ENCODE measurements at regions of chr5 and their contacts with region 1.

Region 1: GRCh38 chr5:62256161-62257019 is 49.6 kb upstream of the KIF2A start:
- DNase-seq: peak in 7 of 9 donors; percentile 16 to 77 (median 66)
- ATAC-seq: peak; percentile 82
- H3K4me3 ChIP-seq: peak overlapping the region; percentile 23
- H3K4me3 Mint-ChIP-seq: peak overlapping the region; percentile 59 to 91 (median 80)
- H3K27ac ChIP-seq: peak overlapping the region; percentile 70
- H3K27ac Mint-ChIP-seq: peak overlapping the region; percentile 87 to 99 (median 95)
- H3K4me1 ChIP-seq: peaks cover 12 to 37% of the 10 kb centered on the region in 2 donors
- H3K4me1 Mint-ChIP-seq: peaks cover 39 to 87% (median 83%) of the 10 kb centered on the region in 7 donors
- H3K27me3 ChIP-seq: no peaks in the 10 kb centered on the region
- H3K27me3 Mint-ChIP-seq: no peaks in the 10 kb centered on the region

Region 2: GRCh38 chr5:62112689-62113228 is 143.6 kb before region 1 on chr5:
- CTCF ChIA-PET with region 1: no interaction called
- POLR2A ChIA-PET with region 1: no interaction called
- intact Hi-C with region 1: no loop called
- DNase-seq: no peak
- ATAC-seq: no peak
- H3K4me3 ChIP-seq: no peak overlapping the region
- H3K4me3 Mint-ChIP-seq: no peak overlapping the region
- H3K27ac ChIP-seq: no peak overlapping the region
- H3K27ac Mint-ChIP-seq: no peak overlapping the region
- H3K4me1 ChIP-seq: no peaks in the 10 kb centered on the region
- H3K4me1 Mint-ChIP-seq: no peaks in the 10 kb centered on the region
- H3K27me3 ChIP-seq: no peaks in the 10 kb centered on the region
- H3K27me3 Mint-ChIP-seq: peaks cover 4 to 21% (median 11%) of the 10 kb centered on the region in 5 donors

Region 3: GRCh38 chr5:62231576-62231975 is 24.8 kb before region 1 on chr5:
- CTCF ChIA-PET with region 1: no interaction called
- POLR2A ChIA-PET with region 1: no interaction called
- intact Hi-C with region 1: loop called in 1 of 2 experiments (anchors 1 kb)
- DNase-seq: no peak
- ATAC-seq: no peak
- H3K4me3 ChIP-seq: no peak overlapping the region
- H3K4me3 Mint-ChIP-seq: no peak overlapping the region
- H3K27ac ChIP-seq: no peak overlapping the region
- H3K27ac Mint-ChIP-seq: no peak overlapping the region
- H3K4me1 ChIP-seq: no peaks in the 10 kb centered on the region
- H3K4me1 Mint-ChIP-seq: peaks cover 0 to 41% (median 0%) of the 10 kb centered on the region in 7 donors
- H3K27me3 ChIP-seq: no peaks in the 10 kb centered on the region
- H3K27me3 Mint-ChIP-seq: no peaks in the 10 kb centered on the region

Region 4: GRCh38 chr5:62284946-62285891 is 28.8 kb after region 1 on chr5:
- CTCF ChIA-PET with region 1: interaction called, 3 read pairs
- POLR2A ChIA-PET with region 1: interaction called, 3 read pairs
- intact Hi-C with region 1: loop called in 1 of 2 experiments (anchors 1 kb)
- DNase-seq: peak in 3 of 9 donors; percentile 15 to 78 (median 19)
- ATAC-seq: peak; percentile 34
- H3K4me3 ChIP-seq: no peak overlapping the region
- H3K4me3 Mint-ChIP-seq: peak overlapping the region in 1 of 10 donors; percentile 75
- H3K27ac ChIP-seq: no peak overlapping the region
- H3K27ac Mint-ChIP-seq: peak overlapping the region in 5 of 9 donors; percentile 2 to 96 (median 37)
- H3K4me1 ChIP-seq: peaks cover 2 to 30% of the 10 kb centered on the region in 2 donors
- H3K4me1 Mint-ChIP-seq: peaks cover 3 to 63% (median 34%) of the 10 kb centered on the region in 7 donors
- H3K27me3 ChIP-seq: no peaks in the 10 kb centered on the region
- H3K27me3 Mint-ChIP-seq: no peaks in the 10 kb centered on the region

Region 5: GRCh38 chr5:62297026-62297425 is 40.6 kb after region 1 on chr5:
- CTCF ChIA-PET with region 1: interaction called, 3 read pairs
- POLR2A ChIA-PET with region 1: interaction called, 5 read pairs
- intact Hi-C with region 1: loop called in 1 of 2 experiments (anchors 2 kb)
- DNase-seq: peak in 3 of 9 donors; percentile 18 to 21 (median 20)
- ATAC-seq: no peak
- H3K4me3 ChIP-seq: no peak overlapping the region
- H3K4me3 Mint-ChIP-seq: peak overlapping the region; percentile 30 to 81 (median 72)
- H3K27ac ChIP-seq: no peak overlapping the region
- H3K27ac Mint-ChIP-seq: peak overlapping the region in 8 of 9 donors; percentile 15 to 84 (median 74)
- H3K4me1 ChIP-seq: peaks cover 46% of the 10 kb centered on the region in 2 donors
- H3K4me1 Mint-ChIP-seq: peaks cover 24 to 69% (median 55%) of the 10 kb centered on the region in 7 donors
- H3K27me3 ChIP-seq: no peaks in the 10 kb centered on the region
- H3K27me3 Mint-ChIP-seq: no peaks in the 10 kb centered on the region

Region 6: GRCh38 chr5:62331921-62332320 is 75.5 kb after region 1 on chr5:
- CTCF ChIA-PET with region 1: no interaction called
- POLR2A ChIA-PET with region 1: no interaction called
- intact Hi-C with region 1: loop called in 1 of 2 experiments (anchors 2 kb)
- DNase-seq: no peak
- ATAC-seq: no peak
- H3K4me3 ChIP-seq: no peak overlapping the region
- H3K4me3 Mint-ChIP-seq: no peak overlapping the region
- H3K27ac ChIP-seq: no peak overlapping the region
- H3K27ac Mint-ChIP-seq: peak overlapping the region in 5 of 9 donors; percentile 8 to 63 (median 13)
- H3K4me1 ChIP-seq: peaks cover 9 to 33% of the 10 kb centered on the region in 2 donors
- H3K4me1 Mint-ChIP-seq: peaks cover 46 to 91% (median 84%) of the 10 kb centered on the region in 7 donors
- H3K27me3 ChIP-seq: no peaks in the 10 kb centered on the region
- H3K27me3 Mint-ChIP-seq: no peaks in the 10 kb centered on the region

Region 7: DNA sequence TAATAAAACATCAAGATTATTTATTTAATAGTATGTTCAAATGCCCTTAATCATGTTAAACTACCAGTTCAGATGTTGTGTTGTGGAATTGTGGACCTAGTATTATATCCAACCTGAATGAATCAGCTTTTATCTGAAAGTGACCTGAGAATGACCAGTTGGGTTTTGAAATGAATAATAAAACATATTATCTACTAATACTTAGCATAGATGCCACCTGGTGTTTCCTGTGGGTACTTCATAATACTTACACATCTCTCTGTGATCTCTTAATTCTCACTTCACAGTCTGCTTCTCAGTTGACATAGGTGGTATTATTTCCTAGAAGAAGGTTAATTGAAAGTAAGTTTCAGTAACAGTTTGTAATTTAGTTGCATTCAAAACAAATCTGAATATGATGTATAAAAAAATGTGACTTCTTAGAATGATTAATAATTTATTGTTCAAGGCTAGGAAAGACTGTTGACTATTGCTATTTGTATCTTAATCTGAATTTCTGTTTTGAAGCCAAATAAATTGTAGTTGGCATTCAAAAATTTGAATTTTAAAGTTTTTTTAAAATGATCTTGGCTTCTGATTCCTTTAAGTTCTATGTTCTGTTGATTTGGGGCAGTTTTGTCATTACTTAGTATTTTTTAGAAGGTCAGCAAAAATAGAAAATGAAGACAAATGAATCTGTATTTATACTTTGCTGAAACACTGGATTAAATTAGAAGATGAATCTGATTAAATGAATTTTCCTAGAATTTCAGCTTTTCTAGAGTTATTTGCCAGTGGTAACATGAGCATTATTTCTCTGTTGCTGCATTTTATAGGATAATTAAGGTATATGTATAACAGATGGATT is 97.9 kb after region 1 on chr5:
- CTCF ChIA-PET with region 1: no interaction called
- POLR2A ChIA-PET with region 1: no interaction called
- intact Hi-C with region 1: loop called in 1 of 2 experiments (anchors 1 kb)
- DNase-seq: peak in 7 of 9 donors; percentile 28 to 53 (median 44)
- ATAC-seq: peak; percentile 73
- H3K4me3 ChIP-seq: no peak overlapping the region
- H3K4me3 Mint-ChIP-seq: no peak overlapping the region
- H3K27ac ChIP-seq: no peak overlapping the region
- H3K27ac Mint-ChIP-seq: peak overlapping the region in 4 of 9 donors; percentile 12 to 40 (median 28)
- H3K4me1 ChIP-seq: no peaks in the 10 kb centered on the region
- H3K4me1 Mint-ChIP-seq: peaks cover 0 to 22% (median 5%) of the 10 kb centered on the region in 7 donors
- H3K27me3 ChIP-seq: no peaks in the 10 kb centered on the region
- H3K27me3 Mint-ChIP-seq: no peaks in the 10 kb centered on the region